ENCODE measurements at regions of chr6 and their contacts with region 1.

Region 1: DNA sequence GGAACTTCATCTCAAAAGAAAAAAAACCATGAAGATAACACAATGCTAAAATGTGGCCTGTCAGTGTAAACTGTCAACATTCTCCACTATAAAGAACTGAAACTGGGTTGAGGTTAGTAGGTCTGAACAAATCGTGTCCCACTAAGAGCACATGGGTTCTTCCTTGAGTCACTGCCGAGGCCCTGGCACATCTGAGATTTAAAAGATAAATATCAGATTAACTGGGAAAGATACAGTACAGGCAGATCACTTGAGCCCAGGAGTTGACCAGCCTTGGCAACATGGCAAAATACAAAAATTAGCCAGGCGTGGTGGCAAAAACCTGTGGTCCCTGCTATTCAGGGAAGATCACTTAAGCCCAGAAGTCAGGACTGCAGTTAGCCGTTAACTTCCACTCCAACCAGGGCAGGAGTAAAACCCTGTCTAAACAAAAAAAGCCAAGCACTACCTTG is 5.6 kb downstream of the EEF1A1 start:
- DNase-seq: no peak
- H3K4me3 ChIP-seq: peak overlapping the region in 9 of 59 donors; percentile 3 to 42 (median 17)
- H3K27ac ChIP-seq: peak overlapping the region in 43 of 59 donors; percentile 2 to 85 (median 38)
- H3K27me3 ChIP-seq: no peaks in the 10 kb centered on the region
- CTCF ChIP-seq: no peak

Region 2: GRCh38 chr6:73461537-73462350 is 53.5 kb before region 1 on chr6 and contains the start of gene MTO1:
- intact Hi-C with region 1: loop called in 1 of 2 experiments (anchors 5 kb)
- DNase-seq: peak; percentile 77 to 95 (median 90)
- H3K4me3 ChIP-seq: peak within 1 kb of the TSS; percentile 71 to 100 (median 95)
- H3K27ac ChIP-seq: peak within 1 kb of the TSS; percentile 74 to 99 (median 95)
- H3K27me3 ChIP-seq: no peaks in the 10 kb centered on the region
- CTCF ChIP-seq: peak in 21 of 56 donors; percentile 3 to 54 (median 25)
- total RNA-seq, gene MTO1: 25.5 to 56.6 (median 37.6) TPM

Region 3: GRCh38 chr6:73580247-73581149 is 65.3 kb after region 1 on chr6:
- intact Hi-C with region 1: no loop called
- DNase-seq: peak; percentile 17 to 89 (median 82)
- H3K4me3 ChIP-seq: peak overlapping the region in 58 of 59 donors; percentile 24 to 70 (median 46)
- H3K27ac ChIP-seq: peak overlapping the region; percentile 84 to 100 (median 96)
- H3K27me3 ChIP-seq: no peaks in the 10 kb centered on the region
- CTCF ChIP-seq: peak in 54 of 56 donors; percentile 29 to 78 (median 56)

Region 4: DNA sequence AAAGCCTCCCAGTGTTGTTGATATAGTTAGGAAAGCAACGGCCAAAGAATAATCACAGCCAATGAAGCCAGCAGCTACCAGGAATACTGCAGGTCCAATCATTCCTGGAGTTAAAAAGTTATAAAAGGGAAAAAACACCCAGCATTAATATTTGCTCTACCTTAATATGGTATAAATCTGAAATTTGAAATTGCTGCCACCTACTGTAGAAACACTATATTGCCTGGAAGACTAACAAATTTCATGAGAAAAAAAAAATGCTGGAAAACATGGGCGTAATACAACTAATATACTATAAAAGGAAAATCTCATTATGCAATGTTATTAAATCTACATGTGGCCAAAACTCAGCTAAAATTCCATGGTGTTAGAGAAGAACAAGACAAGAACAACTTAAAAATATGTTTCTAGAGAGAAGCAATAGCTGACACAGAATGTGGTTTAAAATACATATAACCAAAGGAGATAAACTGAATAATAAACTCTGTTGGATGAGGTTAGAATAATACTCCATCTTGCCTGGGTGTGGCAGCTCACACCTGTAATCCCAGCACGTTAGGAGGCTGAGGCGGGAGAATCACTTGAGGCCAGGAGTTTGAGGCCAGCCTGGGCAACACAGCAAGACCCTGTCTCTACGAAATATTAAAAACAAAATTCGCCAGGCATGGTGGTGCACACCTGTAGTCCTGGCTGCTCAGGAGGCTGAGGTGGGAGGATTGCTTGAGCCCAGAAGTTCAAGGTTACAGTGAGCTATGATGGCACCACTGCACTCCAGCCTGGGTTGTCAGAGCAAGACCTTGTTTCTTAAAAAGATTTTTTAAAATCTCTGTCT is 95.4 kb after region 1 on chr6:
- intact Hi-C with region 1: loop called (anchors 1 to 2 kb)
- DNase-seq: no peak
- H3K4me3 ChIP-seq: no peak overlapping the region
- H3K27ac ChIP-seq: peak overlapping the region in 11 of 59 donors; percentile 0 to 49 (median 18)
- H3K27me3 ChIP-seq: no peaks in the 10 kb centered on the region
- CTCF ChIP-seq: peak; percentile 60 to 91 (median 79)

Region 5: DNA sequence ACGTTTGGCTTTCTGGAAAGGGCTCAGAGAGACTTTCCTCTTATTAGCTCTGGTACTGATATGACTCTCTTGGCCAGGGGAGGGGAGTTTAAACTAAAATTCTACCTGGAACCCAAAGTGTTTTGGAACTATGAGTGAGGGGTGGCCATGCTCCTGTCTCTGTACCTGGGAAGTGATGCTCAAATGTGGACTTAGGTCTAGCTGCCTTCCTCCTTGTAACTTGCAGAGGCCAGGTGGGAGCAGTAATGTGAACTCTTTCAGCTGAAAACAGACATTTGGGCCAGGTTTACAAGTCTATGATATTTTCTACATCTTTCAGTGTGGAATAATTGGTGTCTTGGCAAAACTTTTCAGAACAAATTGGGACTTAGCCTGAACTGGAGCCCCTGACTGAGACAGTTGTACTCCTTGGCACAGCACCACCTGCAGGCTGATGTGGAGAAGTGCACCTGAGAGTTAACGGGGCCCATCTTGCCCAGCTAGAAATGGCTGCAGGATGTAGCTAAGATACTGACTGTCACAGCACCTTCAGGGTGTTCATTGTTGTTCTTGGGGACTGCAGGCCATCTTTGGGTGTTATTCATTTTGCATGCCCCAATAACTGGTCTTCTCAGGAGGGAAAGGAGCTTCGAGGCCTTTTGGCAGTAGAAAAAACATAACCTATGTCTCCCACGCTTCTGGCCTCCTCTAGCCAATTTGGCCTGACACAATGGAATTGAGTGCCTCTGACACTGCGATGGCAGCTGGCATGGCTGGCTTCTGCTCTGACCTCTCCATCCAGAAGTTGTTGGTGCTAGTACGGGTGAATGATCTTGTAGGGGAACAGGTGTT is 217.8 kb after region 1 on chr6:
- intact Hi-C with region 1: loop called in 1 of 2 experiments (anchors 5 kb)
- DNase-seq: peak; percentile 22 to 69 (median 48)
- H3K4me3 ChIP-seq: no peak overlapping the region
- H3K27ac ChIP-seq: no peak overlapping the region
- H3K27me3 ChIP-seq: no peaks in the 10 kb centered on the region
- CTCF ChIP-seq: peak; percentile 66 to 93 (median 84)